ENCODE measurements at regions of chr2 and their contacts with region 1.

Region 1: GRCh38 chr2:38750891-38751595 is at the start of gene SRSF7:
- DNase-seq: peak; percentile 96

Region 2: GRCh38 chr2:38254796-38255195 is 496.2 kb before region 1 on chr2:
- CTCF ChIA-PET with region 1: no interaction called
- POLR2A ChIA-PET with region 1: no interaction called
- DNase-seq: no peak

Region 3: GRCh38 chr2:38508311-38509039 is 242.6 kb before region 1 on chr2:
- CTCF ChIA-PET with region 1: no interaction called
- POLR2A ChIA-PET with region 1: no interaction called
- DNase-seq: peak; percentile 81

Region 4: GRCh38 chr2:38602732-38603401 is 148.2 kb before region 1 on chr2 and contains the start of gene HNRNPLL:
- CTCF ChIA-PET with region 1: no interaction called
- POLR2A ChIA-PET with region 1: interaction called, 29 read pairs
- DNase-seq: peak; percentile 95

Region 5: GRCh38 chr2:38734299-38735058 is 16.6 kb before region 1 on chr2:
- CTCF ChIA-PET with region 1: interaction called, 4 read pairs
- POLR2A ChIA-PET with region 1: interaction called, 25 read pairs
- DNase-seq: no peak

Region 6: GRCh38 chr2:38771632-38772031 is 20.6 kb after region 1 on chr2:
- CTCF ChIA-PET with region 1: no interaction called
- POLR2A ChIA-PET with region 1: interaction called, 59 read pairs
- DNase-seq: no peak

Region 7: GRCh38 chr2:38797276-38797675 is 46.2 kb after region 1 on chr2:
- CTCF ChIA-PET with region 1: no interaction called
- POLR2A ChIA-PET with region 1: interaction called, 16 read pairs
- DNase-seq: no peak